Common myeloid progenitor, CD34-positive (primary cell): ENCODE measurements at regions of chr12 and their contacts with region 1.

Region 1: GRCh38 chr12:49515266-49515665 is 23.6 kb upstream of the KCNH3 start:
- DNase-seq: peak in 1 of 3 donors; percentile 10
- H3K4me3 ChIP-seq: no peak overlapping the region
- H3K27ac ChIP-seq: no peak overlapping the region
- H3K4me1 ChIP-seq: no peaks in the 10 kb centered on the region
- H3K27me3 ChIP-seq: no peaks in the 10 kb centered on the region

Region 2: GRCh38 chr12:49331380-49332222 is 183.7 kb before region 1 on chr12:
- CTCF ChIA-PET with region 1: interaction called, 10 read pairs
- POLR2A ChIA-PET with region 1: no interaction called
- DNase-seq: peak in 1 of 3 donors; percentile 36
- H3K4me3 ChIP-seq: no peak overlapping the region
- H3K27ac ChIP-seq: no peak overlapping the region
- H3K4me1 ChIP-seq: peaks cover 0 to 10% (median 2%) of the 10 kb centered on the region in 4 experiments
- H3K27me3 ChIP-seq: peaks cover 0 to 64% (median 32%) of the 10 kb centered on the region in 5 experiments

Region 3: GRCh38 chr12:49347384-49348237 is 167.7 kb before region 1 on chr12:
- CTCF ChIA-PET with region 1: interaction called, 30 read pairs
- POLR2A ChIA-PET with region 1: no interaction called
- DNase-seq: peak; percentile 54 to 69 (median 69)
- H3K4me3 ChIP-seq: peak overlapping the region in 5 of 7 experiments; percentile 22 to 66 (median 34)
- H3K27ac ChIP-seq: no peak overlapping the region
- H3K4me1 ChIP-seq: peaks cover 0 to 49% (median 38%) of the 10 kb centered on the region in 4 experiments
- H3K27me3 ChIP-seq: peaks cover 4 to 81% (median 48%) of the 10 kb centered on the region in 5 experiments

Region 4: GRCh38 chr12:49366652-49367380 is 148.4 kb before region 1 on chr12:
- CTCF ChIA-PET with region 1: interaction called, 270 read pairs
- POLR2A ChIA-PET with region 1: no interaction called
- DNase-seq: peak; percentile 87 to 95 (median 93)
- H3K4me3 ChIP-seq: peak overlapping the region; percentile 69 to 94 (median 79)
- H3K27ac ChIP-seq: peak overlapping the region; percentile 66 to 87
- H3K4me1 ChIP-seq: peaks cover 19 to 31% (median 26%) of the 10 kb centered on the region in 4 experiments
- H3K27me3 ChIP-seq: no peaks in the 10 kb centered on the region

Region 5: DNA sequence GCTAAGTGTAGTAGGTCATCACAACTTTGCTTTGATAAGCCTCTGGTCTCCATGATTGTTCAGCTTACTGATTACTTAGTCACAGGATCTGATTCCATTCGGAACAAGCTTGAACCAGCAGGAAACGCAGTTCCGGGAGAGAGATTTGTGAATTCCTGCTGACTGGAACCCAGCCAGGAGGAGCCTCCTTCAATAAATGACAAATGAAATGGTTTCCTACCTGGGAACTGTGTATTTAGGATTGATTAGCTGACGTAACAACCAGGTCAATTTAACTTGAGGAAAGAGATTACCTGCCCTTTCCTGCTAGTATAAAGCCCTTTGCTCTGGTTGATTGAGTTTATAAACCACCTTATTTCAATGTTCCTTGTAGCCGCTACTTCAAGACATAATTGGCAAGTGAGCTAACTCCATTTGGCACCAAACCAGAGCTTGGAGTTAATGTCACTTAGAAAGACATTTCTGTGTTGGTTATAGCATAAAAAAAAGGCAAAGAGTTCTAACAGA is 11.5 kb before region 1 on chr12:
- CTCF ChIA-PET with region 1: interaction called, 17 read pairs
- POLR2A ChIA-PET with region 1: no interaction called
- DNase-seq: no peak
- H3K4me3 ChIP-seq: no peak overlapping the region
- H3K27ac ChIP-seq: no peak overlapping the region
- H3K4me1 ChIP-seq: peaks cover 0 to 2% (median 0%) of the 10 kb centered on the region in 4 experiments
- H3K27me3 ChIP-seq: no peaks in the 10 kb centered on the region